Activated T-helper 1 cell treated with anti-CD3 and anti-CD28 coated beads, Interleukin-12 subunit alpha, Interleukin-12 subunit beta, Interleukin-2, Interleukin-4 antibody, amounts not matched to agents 30 ng/mL and 10 ng/mL and 1 ng/mL, durations not matched to agents 14 hours and 24 hours and 36 hours (primary cell): ENCODE measurements at regions of chr16 and their contacts with region 1.

Region 1: DNA sequence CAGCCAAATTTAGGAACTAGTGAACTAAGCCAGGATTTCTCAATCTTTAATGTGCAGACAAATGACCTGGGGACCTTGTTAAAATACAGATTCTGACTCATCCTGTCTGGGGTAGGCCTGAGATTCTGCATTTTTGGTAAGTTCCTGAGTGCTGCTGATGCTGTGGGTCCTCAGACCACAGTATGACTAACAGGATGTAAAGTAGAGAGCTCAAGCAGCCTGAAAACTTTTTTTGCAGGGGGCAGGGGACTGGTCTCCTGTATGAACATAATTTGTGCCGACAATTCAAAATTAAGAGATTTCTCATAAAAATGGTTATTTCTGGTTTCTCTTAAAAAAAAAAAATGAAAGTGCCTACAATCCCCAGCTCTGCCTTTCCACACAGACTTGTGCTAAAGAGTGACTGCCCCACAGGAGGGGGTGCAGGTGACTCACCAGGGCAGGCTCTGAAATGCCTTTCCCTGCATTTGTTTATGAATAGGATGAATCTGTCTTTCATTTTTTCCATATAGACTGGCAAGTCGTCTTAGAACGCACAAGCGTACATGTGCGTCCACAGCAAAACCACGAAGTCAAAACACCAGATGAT is 271.5 kb downstream of the PHKB start:
- DNase-seq: no peak
- H3K4me3 Mint-ChIP-seq: peak overlapping the region; percentile 47
- H3K27ac Mint-ChIP-seq: peak overlapping the region; percentile 87
- H3K4me1 Mint-ChIP-seq: peaks cover 21% of the 10 kb centered on the region
- H3K27me3 Mint-ChIP-seq: no peaks in the 10 kb centered on the region

Region 2: DNA sequence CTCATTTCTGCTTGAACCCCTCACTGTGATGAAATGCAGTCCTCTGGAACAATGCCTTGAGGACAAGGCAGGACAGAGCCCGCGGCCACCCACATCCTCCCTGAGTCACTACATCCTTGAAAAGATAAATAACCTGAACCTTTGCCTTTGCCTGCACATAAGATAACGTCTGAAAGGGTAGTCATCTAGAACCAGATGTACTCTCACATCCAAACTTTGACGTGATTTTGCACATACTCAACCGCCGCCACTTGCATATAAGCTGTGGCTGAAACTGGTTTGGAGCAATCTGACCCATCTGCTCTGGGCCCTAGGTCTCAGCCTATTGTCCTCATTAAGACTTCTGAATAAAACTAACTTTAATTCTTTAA is 19.4 kb before region 1 on chr16:
- intact Hi-C with region 1: loop called (anchors 2 kb)
- DNase-seq: peak; percentile 4
- H3K4me3 Mint-ChIP-seq: no peak overlapping the region
- H3K27ac Mint-ChIP-seq: peak overlapping the region; percentile 27
- H3K4me1 Mint-ChIP-seq: peaks cover 7% of the 10 kb centered on the region
- H3K27me3 Mint-ChIP-seq: peaks cover 1% of the 10 kb centered on the region

Region 3: GRCh38 chr16:47779201-47780016 is 46.8 kb after region 1 on chr16:
- intact Hi-C with region 1: loop called (anchors 2 kb)
- DNase-seq: peak; percentile 6
- H3K4me3 Mint-ChIP-seq: peak overlapping the region; percentile 76
- H3K27ac Mint-ChIP-seq: peak overlapping the region; percentile 82
- H3K4me1 Mint-ChIP-seq: peaks cover 11% of the 10 kb centered on the region
- H3K27me3 Mint-ChIP-seq: peaks cover 2% of the 10 kb centered on the region

Region 4: GRCh38 chr16:48123104-48123788 is 390.6 kb after region 1 on chr16:
- intact Hi-C with region 1: loop called (anchors 10 kb)
- DNase-seq: peak; percentile 13
- H3K4me3 Mint-ChIP-seq: no peak overlapping the region
- H3K27ac Mint-ChIP-seq: peak overlapping the region; percentile 36
- H3K4me1 Mint-ChIP-seq: peaks cover 40% of the 10 kb centered on the region
- H3K27me3 Mint-ChIP-seq: no peaks in the 10 kb centered on the region